ENCODE measurements at regions of chr5 and their contacts with region 1.

Region 1: GRCh38 chr5:55691265-55692105 is 20.6 kb downstream of the SLC38A9 start:
- DNase-seq: peak; percentile 59
- ATAC-seq: peak; percentile 75
- H3K4me3 ChIP-seq: no peak overlapping the region
- H3K27ac ChIP-seq: no peak overlapping the region
- H3K4me1 ChIP-seq: no peaks in the 10 kb centered on the region; the same call in 1 of the 2 replicates
- H3K27me3 ChIP-seq: no peaks in the 10 kb centered on the region
- CTCF ChIP-seq: peak; percentile 69
- POLR2A ChIP-seq: no peak
- RAD21 ChIP-seq: peak; percentile 65

Region 2: GRCh38 chr5:55172051-55172899 is 519.2 kb before region 1 on chr5:
- CTCF ChIA-PET with region 1: no interaction called
- POLR2A ChIA-PET with region 1: no interaction called
- dilution Hi-C with region 1: no loop called
- in situ Hi-C with region 1: no loop called
- intact Hi-C with region 1: loop called (anchors 5 kb)
- DNase-seq: peak; percentile 78
- ATAC-seq: peak; percentile 45
- H3K4me3 ChIP-seq: peak overlapping the region; percentile 55
- H3K27ac ChIP-seq: no peak overlapping the region
- H3K4me1 ChIP-seq: peaks cover 7% of the 10 kb centered on the region
- H3K27me3 ChIP-seq: peaks cover 28% of the 10 kb centered on the region
- CTCF ChIP-seq: peak; percentile 88
- POLR2A ChIP-seq: no peak
- RAD21 ChIP-seq: peak; percentile 87

Region 3: GRCh38 chr5:55324815-55325418 is 366.6 kb before region 1 on chr5:
- CTCF ChIA-PET with region 1: no interaction called
- POLR2A ChIA-PET with region 1: no interaction called
- dilution Hi-C with region 1: no loop called
- in situ Hi-C with region 1: no loop called
- intact Hi-C with region 1: loop called (anchors 5 kb)
- DNase-seq: peak; percentile 58
- ATAC-seq: peak; percentile 83
- H3K4me3 ChIP-seq: no peak overlapping the region
- H3K27ac ChIP-seq: no peak overlapping the region
- H3K4me1 ChIP-seq: no peaks in the 10 kb centered on the region
- H3K27me3 ChIP-seq: no peaks in the 10 kb centered on the region
- CTCF ChIP-seq: peak; percentile 69
- POLR2A ChIP-seq: no peak
- RAD21 ChIP-seq: peak; percentile 72

Region 4: GRCh38 chr5:55344392-55344992 is 347.0 kb before region 1 on chr5:
- CTCF ChIA-PET with region 1: no interaction called
- POLR2A ChIA-PET with region 1: no interaction called
- dilution Hi-C with region 1: no loop called
- in situ Hi-C with region 1: no loop called
- intact Hi-C with region 1: loop called (anchors 2 kb)
- DNase-seq: peak; percentile 70
- ATAC-seq: peak; percentile 83
- H3K4me3 ChIP-seq: no peak overlapping the region
- H3K27ac ChIP-seq: no peak overlapping the region
- H3K4me1 ChIP-seq: no peaks in the 10 kb centered on the region
- H3K27me3 ChIP-seq: no peaks in the 10 kb centered on the region
- CTCF ChIP-seq: peak; percentile 86
- POLR2A ChIP-seq: no peak
- RAD21 ChIP-seq: peak; percentile 66

Region 5: DNA sequence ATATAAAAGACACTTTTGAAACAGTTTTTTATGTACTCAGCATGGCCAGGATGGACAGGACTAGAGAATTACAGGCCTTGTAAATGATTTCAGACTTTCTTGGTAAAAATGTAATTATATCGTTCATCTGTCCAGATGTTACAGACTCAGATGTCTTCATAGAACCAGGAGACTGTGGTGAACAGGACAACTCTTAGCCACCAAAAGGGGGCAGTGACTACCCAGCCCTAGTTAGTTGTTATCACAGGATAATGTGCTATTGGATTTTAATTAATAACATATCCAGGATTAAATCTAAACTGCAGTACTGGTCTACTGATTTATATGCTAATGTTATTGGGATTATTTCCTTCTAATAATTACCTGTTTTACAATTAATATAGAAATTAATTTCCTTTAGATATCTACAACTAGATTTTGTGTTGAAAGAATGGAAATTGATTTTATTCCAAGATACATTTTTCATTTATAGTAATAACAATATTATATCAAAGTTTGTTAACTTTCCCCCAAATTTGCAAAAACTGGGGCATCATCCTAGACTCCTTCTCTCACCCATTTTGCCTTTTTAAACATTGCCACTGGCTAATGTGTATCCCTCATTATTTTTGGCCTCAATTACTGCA is 284.3 kb before region 1 on chr5:
- CTCF ChIA-PET with region 1: interaction called, 3 read pairs
- POLR2A ChIA-PET with region 1: no interaction called
- dilution Hi-C with region 1: no loop called
- in situ Hi-C with region 1: no loop called
- intact Hi-C with region 1: loop called (anchors 1 kb)
- DNase-seq: peak; percentile 64
- ATAC-seq: peak; percentile 87
- H3K4me3 ChIP-seq: no peak overlapping the region
- H3K27ac ChIP-seq: no peak overlapping the region
- H3K4me1 ChIP-seq: 0 out of 2 replicates have a peak, but pooled peaks cover 2% of the 10 kb centered on the region
- H3K27me3 ChIP-seq: no peaks in the 10 kb centered on the region
- CTCF ChIP-seq: peak; percentile 79
- POLR2A ChIP-seq: no peak
- RAD21 ChIP-seq: peak; percentile 85

Region 6: DNA sequence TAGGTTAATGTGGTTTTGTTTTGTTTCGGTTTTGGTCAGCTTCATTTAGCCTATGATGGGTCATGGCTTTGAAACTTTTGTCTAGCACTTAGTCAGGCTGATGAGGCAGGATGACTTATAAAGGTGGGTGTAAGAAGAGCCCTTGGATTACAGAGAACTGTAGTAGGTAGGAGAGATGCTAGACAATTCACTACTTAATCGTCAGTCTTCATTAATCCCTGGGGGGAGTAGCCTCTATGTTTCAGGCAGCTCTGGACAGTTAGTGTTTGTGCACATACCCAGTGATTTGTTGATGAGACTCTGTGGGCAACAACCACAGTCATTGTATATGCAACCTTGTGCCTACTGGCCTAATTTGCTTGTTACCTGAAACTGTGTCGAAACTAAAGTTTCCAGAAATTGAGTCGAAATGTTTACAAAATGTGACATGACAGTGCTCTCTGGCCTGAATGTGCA is 270.4 kb before region 1 on chr5:
- CTCF ChIA-PET with region 1: no interaction called
- POLR2A ChIA-PET with region 1: no interaction called
- dilution Hi-C with region 1: no loop called
- in situ Hi-C with region 1: no loop called
- intact Hi-C with region 1: loop called (anchors 5 kb)
- DNase-seq: peak; percentile 63
- ATAC-seq: no peak
- H3K4me3 ChIP-seq: no peak overlapping the region
- H3K27ac ChIP-seq: no peak overlapping the region
- H3K4me1 ChIP-seq: peaks cover 9% of the 10 kb centered on the region
- H3K27me3 ChIP-seq: no peaks in the 10 kb centered on the region
- CTCF ChIP-seq: no peak
- POLR2A ChIP-seq: no peak
- RAD21 ChIP-seq: no peak

Region 7: GRCh38 chr5:55534436-55535198 is 156.9 kb before region 1 on chr5 and contains the start of gene PLPP1:
- CTCF ChIA-PET with region 1: interaction called, 3 read pairs
- POLR2A ChIA-PET with region 1: no interaction called
- dilution Hi-C with region 1: no loop called
- in situ Hi-C with region 1: no loop called
- intact Hi-C with region 1: loop called (anchors 1 kb)
- DNase-seq: peak; percentile 83
- ATAC-seq: peak; percentile 95
- H3K4me3 ChIP-seq: peak within 1 kb of the TSS; percentile 93
- H3K27ac ChIP-seq: peak within 1 kb of the TSS; percentile 97
- H3K4me1 ChIP-seq: 0 out of 2 replicates have a peak, but pooled peaks cover 3% of the 10 kb centered on the region
- H3K27me3 ChIP-seq: no peaks in the 10 kb centered on the region
- CTCF ChIP-seq: no peak
- POLR2A ChIP-seq: peak; percentile 72
- RAD21 ChIP-seq: no peak; the same call in 1 of the 2 replicates
- total RNA-seq, gene PLPP1: 21.3 and 24.7 TPM in 2 replicates

Region 8: DNA sequence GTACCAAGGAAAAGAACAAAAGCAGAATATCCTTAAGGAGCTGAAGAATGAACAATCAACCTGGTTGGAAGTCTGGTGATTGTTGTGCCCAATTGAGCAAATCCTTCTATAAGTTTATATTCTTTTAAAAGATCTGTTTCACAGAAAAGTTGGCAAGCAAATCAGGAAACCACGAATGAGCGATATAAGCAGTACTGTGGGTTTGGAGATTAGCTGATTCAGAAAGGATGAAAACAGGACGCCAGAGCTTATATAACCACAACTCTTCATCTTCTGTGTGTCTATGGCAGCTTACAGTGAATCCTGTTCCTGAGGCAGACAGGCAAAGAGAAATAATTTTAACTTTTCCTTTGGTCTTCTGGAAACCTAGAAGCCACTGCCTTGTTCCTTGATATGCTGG is 41.1 kb before region 1 on chr5:
- CTCF ChIA-PET with region 1: no interaction called
- POLR2A ChIA-PET with region 1: no interaction called
- dilution Hi-C with region 1: no loop called
- in situ Hi-C with region 1: no loop called
- intact Hi-C with region 1: no loop called
- DNase-seq: peak; percentile 84
- ATAC-seq: peak; percentile 73
- H3K4me3 ChIP-seq: no peak overlapping the region
- H3K27ac ChIP-seq: no peak overlapping the region
- H3K4me1 ChIP-seq: peaks cover 5% of the 10 kb centered on the region; the same call in 1 of the 2 replicates
- H3K27me3 ChIP-seq: no peaks in the 10 kb centered on the region
- CTCF ChIP-seq: no peak
- POLR2A ChIP-seq: no peak
- RAD21 ChIP-seq: no peak

Region 9: DNA sequence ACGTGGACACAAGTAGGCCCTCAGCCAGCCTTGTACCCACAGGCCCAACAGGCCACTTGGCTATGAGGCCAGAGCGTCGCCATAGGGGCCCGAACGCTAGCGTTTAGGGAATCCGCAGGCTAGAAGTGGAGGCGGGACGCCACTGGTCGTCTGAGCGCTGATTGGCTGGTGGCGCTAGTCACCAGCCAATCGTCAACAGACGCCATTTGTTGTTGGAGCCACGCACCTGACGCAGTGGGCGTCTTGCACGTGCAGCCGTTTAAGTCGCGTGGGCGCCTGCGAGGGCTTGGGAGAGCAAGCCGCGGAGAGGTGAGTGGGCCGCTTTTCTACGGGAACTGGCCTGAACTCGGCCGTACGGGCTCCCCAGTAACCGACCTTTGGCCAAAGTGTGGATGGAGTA is 46.3 kb after region 1 on chr5 and contains the start of gene DDX4:
- CTCF ChIA-PET with region 1: no interaction called
- POLR2A ChIA-PET with region 1: no interaction called
- dilution Hi-C with region 1: no loop called
- in situ Hi-C with region 1: no loop called
- intact Hi-C with region 1: no loop called
- DNase-seq: no peak
- ATAC-seq: no peak
- H3K4me3 ChIP-seq: no peak within 1 kb of the TSS
- H3K27ac ChIP-seq: no peak within 1 kb of the TSS
- H3K4me1 ChIP-seq: no peaks in the 10 kb centered on the region
- H3K27me3 ChIP-seq: peaks cover 3% of the 10 kb centered on the region; the same call in 1 of the 2 replicates
- CTCF ChIP-seq: no peak
- POLR2A ChIP-seq: no peak
- RAD21 ChIP-seq: no peak
- total RNA-seq, gene DDX4: not detected in 2 replicates

Region 10: DNA sequence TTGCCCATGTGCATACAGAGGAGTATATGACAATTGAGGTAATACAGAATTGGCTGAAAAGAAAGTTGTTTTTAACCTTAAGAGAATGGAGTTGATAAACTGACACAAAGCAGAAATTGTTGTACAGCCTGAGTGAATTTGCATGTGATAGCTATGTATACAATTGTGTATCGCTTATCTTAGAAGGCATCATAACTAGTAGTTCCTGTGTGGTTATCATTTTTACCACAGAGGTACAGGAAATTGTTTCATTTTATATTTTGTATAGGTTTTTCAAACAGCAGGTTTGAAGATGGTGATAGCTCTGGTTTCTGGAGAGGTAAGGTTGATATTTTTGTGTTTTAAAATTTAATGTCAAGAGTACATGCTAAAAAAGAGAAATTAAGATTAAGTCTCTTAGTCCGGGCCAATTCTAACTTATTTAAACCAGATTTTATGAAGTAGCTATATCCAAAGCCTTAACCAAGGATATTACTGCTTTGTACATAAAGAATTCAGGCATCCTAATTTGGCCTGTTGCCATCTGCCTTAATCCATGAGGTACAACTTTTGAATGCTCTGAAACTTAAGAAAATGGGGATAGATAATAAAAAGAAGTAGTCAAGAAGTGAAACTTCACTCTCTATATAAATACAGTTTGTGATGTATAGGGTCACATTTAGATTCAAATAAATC is 72.4 kb after region 1 on chr5:
- CTCF ChIA-PET with region 1: no interaction called
- POLR2A ChIA-PET with region 1: no interaction called
- dilution Hi-C with region 1: no loop called
- in situ Hi-C with region 1: no loop called
- intact Hi-C with region 1: no loop called
- DNase-seq: no peak
- ATAC-seq: no peak
- H3K4me3 ChIP-seq: no peak overlapping the region
- H3K27ac ChIP-seq: no peak overlapping the region
- H3K4me1 ChIP-seq: no peaks in the 10 kb centered on the region
- H3K27me3 ChIP-seq: no peaks in the 10 kb centered on the region; the same call in 1 of the 2 replicates
- CTCF ChIP-seq: no peak
- POLR2A ChIP-seq: no peak
- RAD21 ChIP-seq: no peak

Region 11: DNA sequence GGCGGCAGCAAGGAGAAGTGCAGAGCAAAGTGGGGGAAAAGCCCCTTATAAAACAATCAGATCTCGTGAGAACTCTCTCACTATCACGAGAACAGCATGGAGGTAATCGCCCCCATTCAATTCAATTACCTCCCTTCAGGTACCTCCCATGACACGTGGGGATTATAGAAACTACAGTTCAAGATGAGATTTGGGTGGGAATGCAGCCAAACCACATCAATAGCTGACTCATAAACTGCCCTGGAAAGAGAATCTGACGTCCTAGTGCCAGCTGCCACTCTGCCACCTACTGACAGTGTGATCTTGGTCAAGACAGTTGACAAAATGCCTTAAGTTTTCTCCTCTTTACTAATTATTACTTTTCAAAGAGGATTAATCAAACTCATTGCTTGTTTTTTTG is 1610.7 kb after region 1 on chr5:
- CTCF ChIA-PET with region 1: no interaction called
- POLR2A ChIA-PET with region 1: no interaction called
- dilution Hi-C with region 1: no loop called
- in situ Hi-C with region 1: no loop called
- intact Hi-C with region 1: no loop called
- DNase-seq: peak; percentile 56
- ATAC-seq: no peak
- H3K4me3 ChIP-seq: no peak overlapping the region
- H3K27ac ChIP-seq: no peak overlapping the region
- H3K4me1 ChIP-seq: peaks cover 17% of the 10 kb centered on the region
- H3K27me3 ChIP-seq: no peaks in the 10 kb centered on the region
- CTCF ChIP-seq: no peak
- POLR2A ChIP-seq: no peak
- RAD21 ChIP-seq: no peak

Measured in IMR-90 (cell line).